GM12878 (cell line): ENCODE measurements at regions of chr19 and their contacts with region 1.

Region 1: DNA sequence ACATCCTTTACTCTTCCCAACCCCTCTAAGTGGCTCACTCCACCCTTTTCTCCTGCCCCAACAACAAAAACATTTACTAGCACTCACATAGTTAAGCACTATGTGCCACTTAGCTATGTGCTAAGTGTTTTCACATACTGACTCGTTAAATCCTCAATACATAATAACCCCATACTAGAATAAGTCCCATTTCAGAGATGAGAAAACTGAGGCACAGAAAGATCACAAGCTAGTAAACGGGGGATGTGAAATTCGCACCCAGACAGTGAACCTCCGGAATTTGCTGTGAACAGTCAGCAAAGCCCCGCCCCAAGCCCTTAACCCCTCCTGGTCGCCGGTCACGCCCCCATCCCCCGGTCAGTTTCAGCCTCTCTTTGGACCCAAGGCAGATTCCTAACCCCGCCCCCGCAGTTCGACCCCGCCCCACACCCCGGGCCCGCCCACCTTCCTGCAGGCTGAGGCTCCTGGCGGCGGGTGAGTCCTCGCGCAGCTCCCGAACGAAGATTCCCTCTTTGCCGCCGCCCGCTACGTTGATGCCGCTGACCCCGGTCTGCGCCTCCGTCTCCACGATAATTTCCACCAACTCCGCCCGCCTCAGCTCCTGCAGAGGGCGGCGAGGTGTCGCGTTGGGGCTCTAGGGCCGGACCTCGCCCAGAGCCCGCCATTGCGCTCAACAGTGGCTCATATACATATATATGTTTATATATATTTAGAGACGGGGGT is 9.8 kb downstream of the PRX start:
- DNase-seq: peak; percentile 69
- ATAC-seq: peak; percentile 96
- H3K4me3 ChIP-seq: peak overlapping the region; percentile 85
- H3K27ac ChIP-seq: peak overlapping the region; percentile 37; the same call in 1 of the 2 replicates
- H3K4me1 ChIP-seq: peaks cover 8% of the 10 kb centered on the region
- H3K27me3 ChIP-seq: no peaks in the 10 kb centered on the region
- CTCF ChIP-seq: no peak
- EP300 ChIP-seq: no peak
- POLR2A ChIP-seq: peak; percentile 44
- RAD21 ChIP-seq: no peak

Region 2: GRCh38 chr19:40358773-40359172 is 44.6 kb before region 1 on chr19:
- CTCF ChIA-PET with region 1: interaction called, 5 read pairs
- POLR2A ChIA-PET with region 1: interaction called, 3 read pairs
- RAD21 ChIA-PET with region 1: no interaction called
- SMC1A ChIA-PET with region 1: no interaction called
- in situ Hi-C with region 1: no loop called
- intact Hi-C with region 1: loop called (anchors 5 kb)
- DNase-seq: peak; percentile 76
- ATAC-seq: peak; percentile 88
- H3K4me3 ChIP-seq: no peak overlapping the region
- H3K27ac ChIP-seq: peak overlapping the region; percentile 52
- H3K4me1 ChIP-seq: peaks cover 40% of the 10 kb centered on the region
- H3K27me3 ChIP-seq: no peaks in the 10 kb centered on the region
- CTCF ChIP-seq: no peak
- EP300 ChIP-seq: peak; percentile 38 to 70; a peak in 3 of 4 replicates
- POLR2A ChIP-seq: no peak
- RAD21 ChIP-seq: no peak

Region 3: DNA sequence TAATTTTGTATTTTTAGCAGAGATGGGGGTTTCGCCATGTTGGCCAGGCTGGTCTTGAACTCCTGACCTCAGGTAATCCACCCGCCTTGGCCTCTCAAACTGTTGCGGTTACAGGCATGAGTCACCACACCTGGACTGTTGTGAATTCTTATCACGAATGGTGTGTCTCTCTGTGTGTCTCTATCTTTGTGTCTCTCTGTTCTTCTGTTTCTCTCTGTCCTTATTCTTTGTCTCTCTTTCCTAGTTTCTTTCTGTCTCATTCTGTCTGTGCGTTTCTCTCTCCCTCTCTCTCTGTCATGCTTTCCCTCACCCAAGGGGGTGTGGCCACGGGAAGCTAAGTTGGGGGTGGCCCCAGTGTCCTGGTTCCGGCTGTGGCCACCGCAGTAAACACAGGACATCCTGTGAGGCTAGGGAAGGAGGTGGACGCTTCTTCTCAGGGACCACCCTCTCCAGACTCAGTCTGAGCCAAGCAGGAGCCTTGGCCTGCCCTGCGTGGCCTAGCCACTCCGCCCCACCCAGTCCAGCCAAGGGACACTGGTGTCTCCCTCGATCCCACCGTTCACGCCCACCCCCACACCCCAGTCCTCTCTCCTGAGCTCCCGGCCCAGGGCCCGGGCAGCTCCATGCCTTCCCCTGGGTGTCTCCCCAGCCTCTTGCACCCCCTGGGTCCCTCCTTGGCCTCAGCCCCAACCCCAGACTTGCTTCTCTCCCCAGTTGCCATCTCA is 13.7 kb after region 1 on chr19:
- CTCF ChIA-PET with region 1: interaction called, 15 read pairs
- POLR2A ChIA-PET with region 1: interaction called, 15 read pairs
- RAD21 ChIA-PET with region 1: interaction called, 4 read pairs
- SMC1A ChIA-PET with region 1: interaction called, 13 read pairs
- in situ Hi-C with region 1: no loop called
- intact Hi-C with region 1: no loop called
- DNase-seq: no peak
- ATAC-seq: peak; percentile 27
- H3K4me3 ChIP-seq: no peak overlapping the region
- H3K27ac ChIP-seq: peak overlapping the region; percentile 80
- H3K4me1 ChIP-seq: peaks cover 22% of the 10 kb centered on the region
- H3K27me3 ChIP-seq: no peaks in the 10 kb centered on the region
- CTCF ChIP-seq: no peak
- EP300 ChIP-seq: peak; percentile 36 to 60; a peak in 3 of 4 replicates
- POLR2A ChIP-seq: peak; percentile 41; the same call in 1 of the 2 replicates
- RAD21 ChIP-seq: no peak

Region 4: GRCh38 chr19:40425450-40426287 is 22.2 kb after region 1 on chr19 and contains the start of gene SERTAD1:
- CTCF ChIA-PET with region 1: interaction called, 15 read pairs
- POLR2A ChIA-PET with region 1: interaction called, 15 read pairs
- RAD21 ChIA-PET with region 1: interaction called, 4 read pairs
- SMC1A ChIA-PET with region 1: interaction called, 13 read pairs
- in situ Hi-C with region 1: no loop called
- intact Hi-C with region 1: no loop called
- DNase-seq: peak; percentile 96
- ATAC-seq: peak; percentile 90
- H3K4me3 ChIP-seq: peak within 1 kb of the TSS; percentile 97
- H3K27ac ChIP-seq: peak within 1 kb of the TSS; percentile 84
- H3K4me1 ChIP-seq: no peaks in the 10 kb centered on the region
- H3K27me3 ChIP-seq: no peaks in the 10 kb centered on the region
- CTCF ChIP-seq: peak; percentile 53 to 89 (median 58)
- EP300 ChIP-seq: no peak
- POLR2A ChIP-seq: peak; percentile 99
- RAD21 ChIP-seq: no peak
- polyA plus RNA-seq, gene SERTAD1: 0.23 to 1.6 TPM

Region 5: GRCh38 chr19:40444192-40445028 is 41.0 kb after region 1 on chr19 and contains the start of gene SERTAD3:
- CTCF ChIA-PET with region 1: interaction called, 3 read pairs
- POLR2A ChIA-PET with region 1: interaction called, 13 read pairs
- RAD21 ChIA-PET with region 1: interaction called, 11 read pairs
- SMC1A ChIA-PET with region 1: interaction called, 3 read pairs
- in situ Hi-C with region 1: no loop called
- intact Hi-C with region 1: loop called (anchors 1 kb)
- DNase-seq: peak; percentile 76
- ATAC-seq: peak; percentile 88
- H3K4me3 ChIP-seq: peak within 1 kb of the TSS; percentile 88
- H3K27ac ChIP-seq: peak within 1 kb of the TSS; percentile 94
- H3K4me1 ChIP-seq: peaks cover 5% of the 10 kb centered on the region
- H3K27me3 ChIP-seq: no peaks in the 10 kb centered on the region
- CTCF ChIP-seq: peak; percentile 25 to 60 (median 52); a peak in 4 of 6 replicates
- EP300 ChIP-seq: peak in 1 of 2 experiments; percentile 38; a peak in 1 of 4 replicates
- POLR2A ChIP-seq: peak; percentile 97
- RAD21 ChIP-seq: peak; percentile 65
- polyA plus RNA-seq, gene SERTAD3: 4.2 to 8.4 TPM